Mammary epithelial cell (primary cell): ENCODE measurements at regions of chr2 and their contacts with region 1.

Region 1: DNA sequence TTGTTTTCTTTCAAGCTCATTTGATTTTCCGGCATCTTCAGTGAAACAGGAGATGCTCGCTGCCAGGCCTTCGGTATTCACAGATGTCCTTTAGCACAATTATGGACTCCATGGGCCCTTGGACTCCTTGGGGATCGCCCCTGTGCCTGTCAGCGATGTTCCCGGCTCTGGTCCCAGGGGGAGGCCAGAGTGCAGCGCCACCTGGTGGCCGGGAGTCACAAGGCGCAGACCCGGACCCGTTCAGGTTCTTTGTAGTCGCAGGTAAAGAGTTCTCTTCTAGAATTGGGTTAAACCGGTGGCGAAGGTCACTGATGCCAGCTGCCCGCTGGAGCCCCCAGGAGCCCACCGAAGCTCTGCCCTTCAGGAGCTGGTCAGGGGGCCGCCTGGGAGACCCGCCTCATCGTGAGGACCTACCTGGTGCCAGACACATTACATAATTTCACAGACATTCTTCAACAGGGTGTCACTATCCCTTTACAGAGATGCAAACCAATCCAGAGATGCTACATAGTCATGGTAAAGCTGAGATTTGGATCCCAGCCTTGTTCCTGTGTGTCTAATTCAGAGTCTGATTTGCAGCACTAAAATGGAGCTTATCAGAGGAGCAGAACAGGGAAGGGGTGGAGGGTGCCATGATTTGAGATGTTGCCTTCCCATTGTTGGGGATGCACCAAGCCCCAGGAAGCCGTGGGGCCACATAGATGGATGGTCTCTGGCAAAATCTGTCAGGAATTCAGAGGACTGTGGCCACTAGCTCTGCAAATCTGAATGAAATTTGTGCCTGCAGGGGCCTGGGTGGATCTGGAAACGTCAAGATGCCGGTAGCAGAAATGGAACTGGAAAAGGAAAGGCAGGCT is 6.0 kb upstream of the INPP5D start:
- DNase-seq: peak; percentile 35
- H3K4me3 ChIP-seq: no peak overlapping the region
- H3K27ac ChIP-seq: no peak overlapping the region
- H3K4me1 ChIP-seq: peaks cover 7% of the 10 kb centered on the region
- H3K27me3 ChIP-seq: no peaks in the 10 kb centered on the region
- CTCF ChIP-seq: peak; percentile 74 to 92

Region 2: GRCh38 chr2:232761301-232761907 is 292.8 kb before region 1 on chr2:
- CTCF ChIA-PET with region 1: no interaction called
- dilution Hi-C with region 1: no loop called
- in situ Hi-C with region 1: no loop called
- intact Hi-C with region 1: loop called (anchors 5 kb)
- DNase-seq: peak; percentile 39
- H3K4me3 ChIP-seq: no peak overlapping the region
- H3K27ac ChIP-seq: no peak overlapping the region
- H3K4me1 ChIP-seq: no peaks in the 10 kb centered on the region
- H3K27me3 ChIP-seq: no peaks in the 10 kb centered on the region
- CTCF ChIP-seq: peak; percentile 65 to 67

Region 3: GRCh38 chr2:232854082-232854481 is 200.1 kb before region 1 on chr2:
- CTCF ChIA-PET with region 1: no interaction called
- dilution Hi-C with region 1: no loop called
- in situ Hi-C with region 1: no loop called
- intact Hi-C with region 1: loop called (anchors 1 kb)
- DNase-seq: peak; percentile 77
- H3K4me3 ChIP-seq: no peak overlapping the region
- H3K27ac ChIP-seq: no peak overlapping the region
- H3K4me1 ChIP-seq: peaks cover 15% of the 10 kb centered on the region
- H3K27me3 ChIP-seq: no peaks in the 10 kb centered on the region
- CTCF ChIP-seq: no peak

Region 4: GRCh38 chr2:232979871-232980461 is 74.2 kb before region 1 on chr2:
- CTCF ChIA-PET with region 1: no interaction called
- dilution Hi-C with region 1: no loop called
- in situ Hi-C with region 1: no loop called
- intact Hi-C with region 1: loop called (anchors 5 kb)
- DNase-seq: peak; percentile 55
- H3K4me3 ChIP-seq: no peak overlapping the region
- H3K27ac ChIP-seq: no peak overlapping the region
- H3K4me1 ChIP-seq: peaks cover 22% of the 10 kb centered on the region
- H3K27me3 ChIP-seq: no peaks in the 10 kb centered on the region
- CTCF ChIP-seq: peak in 1 of 2 donors; percentile 34

Region 5: DNA sequence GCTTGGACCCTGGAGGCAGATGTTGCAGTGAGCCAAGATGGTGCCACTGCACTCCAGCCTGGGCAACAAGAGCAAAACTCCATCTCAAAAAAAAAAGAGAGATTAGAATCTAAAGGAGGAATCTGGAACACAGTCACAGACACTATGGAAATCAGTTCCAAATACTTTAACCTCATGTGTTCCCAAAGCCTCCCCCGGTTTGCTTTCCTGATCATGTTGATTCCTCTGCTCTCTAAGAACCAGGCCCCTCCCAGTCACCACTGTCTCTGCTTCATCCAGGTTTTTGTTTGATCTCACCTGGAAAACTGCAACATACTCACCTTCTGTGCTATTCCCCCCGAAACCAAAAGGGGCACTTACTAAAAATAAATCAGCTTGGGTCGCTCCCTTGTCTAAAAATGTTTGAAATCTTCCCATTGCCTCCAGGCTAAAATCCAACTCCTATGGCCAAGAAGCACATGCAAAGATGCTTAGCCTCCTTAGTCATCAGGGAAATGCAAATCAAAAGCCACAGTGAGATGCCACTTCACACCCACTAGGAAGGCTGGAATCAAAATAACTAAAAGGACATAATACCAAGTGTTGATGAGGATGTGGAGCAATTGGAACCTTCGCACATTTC is 27.9 kb before region 1 on chr2:
- CTCF ChIA-PET with region 1: no interaction called
- dilution Hi-C with region 1: no loop called
- in situ Hi-C with region 1: no loop called
- intact Hi-C with region 1: no loop called
- DNase-seq: peak; percentile 73
- H3K4me3 ChIP-seq: no peak overlapping the region
- H3K27ac ChIP-seq: peak overlapping the region; percentile 22
- H3K4me1 ChIP-seq: peaks cover 15% of the 10 kb centered on the region
- H3K27me3 ChIP-seq: no peaks in the 10 kb centered on the region
- CTCF ChIP-seq: no peak

Region 6: GRCh38 chr2:233449081-233449901 is 395.1 kb after region 1 on chr2:
- CTCF ChIA-PET with region 1: no interaction called
- dilution Hi-C with region 1: no loop called
- in situ Hi-C with region 1: no loop called
- intact Hi-C with region 1: no loop called
- DNase-seq: no peak
- H3K4me3 ChIP-seq: no peak overlapping the region
- H3K27ac ChIP-seq: no peak overlapping the region
- H3K4me1 ChIP-seq: no peaks in the 10 kb centered on the region
- H3K27me3 ChIP-seq: no peaks in the 10 kb centered on the region
- CTCF ChIP-seq: peak; percentile 48 to 72